Mammary epithelial cell (primary cell): ENCODE measurements at regions of chr9 and their contacts with region 1.

Region 1: GRCh38 chr9:28378231-28378630 is 805.0 kb upstream of the C9orf72 start:
- DNase-seq: peak; percentile 35
- H3K4me3 ChIP-seq: no peak overlapping the region
- H3K27ac ChIP-seq: no peak overlapping the region
- H3K4me1 ChIP-seq: no peaks in the 10 kb centered on the region
- H3K27me3 ChIP-seq: peaks cover 1% of the 10 kb centered on the region
- CTCF ChIP-seq: no peak

Region 2: DNA sequence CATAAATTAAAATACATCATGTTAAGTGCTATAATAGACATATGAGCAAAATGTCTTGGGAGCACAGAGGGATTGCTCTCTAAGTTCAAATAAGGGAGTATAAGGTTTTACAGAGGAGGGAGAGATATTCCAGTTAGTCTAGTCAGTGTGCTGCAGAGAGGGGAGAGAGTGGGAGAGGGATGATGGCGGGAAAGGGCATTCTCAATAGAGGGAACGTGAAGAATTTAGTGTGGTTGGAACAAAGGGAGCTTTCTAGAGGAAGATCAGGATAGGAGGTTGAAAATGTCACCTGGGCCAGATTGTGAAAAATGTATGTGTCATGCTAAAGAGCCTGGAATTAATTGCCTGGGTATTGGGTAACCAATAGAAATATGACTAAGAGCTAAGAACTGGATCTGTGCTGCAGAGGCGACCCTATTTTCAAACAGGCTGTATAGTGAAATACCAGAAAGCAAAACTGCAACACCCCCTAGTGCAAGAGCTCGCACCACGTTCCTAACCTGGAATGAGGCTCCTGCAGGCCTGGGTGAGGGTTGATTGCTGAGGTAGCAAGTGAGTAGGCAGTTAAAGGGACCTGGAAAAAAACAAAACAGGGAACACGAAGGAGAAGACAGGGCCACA is 13.1 kb before region 1 on chr9:
- CTCF ChIA-PET with region 1: no interaction called
- dilution Hi-C with region 1: no loop called
- in situ Hi-C with region 1: no loop called
- intact Hi-C with region 1: no loop called
- DNase-seq: peak; percentile 54
- H3K4me3 ChIP-seq: no peak overlapping the region
- H3K27ac ChIP-seq: no peak overlapping the region
- H3K4me1 ChIP-seq: no peaks in the 10 kb centered on the region
- H3K27me3 ChIP-seq: no peaks in the 10 kb centered on the region
- CTCF ChIP-seq: peak in 1 of 2 donors; percentile 34

Region 3: DNA sequence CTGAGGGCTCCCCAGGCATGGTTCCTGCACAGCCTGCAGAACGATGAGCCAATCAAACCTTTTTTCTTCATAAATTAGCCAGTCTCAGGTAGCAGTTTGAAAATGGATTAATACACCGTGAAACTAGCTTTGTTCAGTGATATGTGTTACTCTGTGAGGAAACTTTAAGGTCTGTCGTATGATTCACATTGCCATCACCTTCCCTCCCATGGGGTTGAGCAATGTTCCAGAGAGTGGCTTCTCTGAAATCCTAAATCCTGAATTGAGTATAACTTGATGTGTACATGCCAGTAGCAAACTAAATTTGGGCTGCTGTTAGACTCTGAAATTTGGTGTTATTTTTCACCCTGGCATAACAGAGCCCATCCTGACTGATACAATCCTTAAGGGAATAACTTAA is 61.5 kb after region 1 on chr9:
- CTCF ChIA-PET with region 1: no interaction called
- dilution Hi-C with region 1: loop called (anchors 5 kb)
- in situ Hi-C with region 1: no loop called
- intact Hi-C with region 1: no loop called
- DNase-seq: peak; percentile 64
- H3K4me3 ChIP-seq: no peak overlapping the region
- H3K27ac ChIP-seq: no peak overlapping the region
- H3K4me1 ChIP-seq: peaks cover 1% of the 10 kb centered on the region
- H3K27me3 ChIP-seq: no peaks in the 10 kb centered on the region
- CTCF ChIP-seq: no peak